Mammary epithelial cell (primary cell): ENCODE measurements at regions of chr4 and their contacts with region 1.

Region 1: GRCh38 chr4:52172166-52172565 is 121.1 kb downstream of the SPATA18 start:
- DNase-seq: peak; percentile 9
- H3K4me3 ChIP-seq: no peak overlapping the region
- H3K27ac ChIP-seq: no peak overlapping the region
- H3K4me1 ChIP-seq: no peaks in the 10 kb centered on the region
- H3K27me3 ChIP-seq: no peaks in the 10 kb centered on the region
- CTCF ChIP-seq: peak; percentile 46 to 52

Region 2: GRCh38 chr4:51885363-51885762 is 286.8 kb before region 1 on chr4:
- CTCF ChIA-PET with region 1: no interaction called
- dilution Hi-C with region 1: no loop called
- in situ Hi-C with region 1: no loop called
- intact Hi-C with region 1: loop called (anchors 1 kb)
- DNase-seq: no peak
- H3K4me3 ChIP-seq: no peak overlapping the region
- H3K27ac ChIP-seq: no peak overlapping the region
- H3K4me1 ChIP-seq: no peaks in the 10 kb centered on the region
- H3K27me3 ChIP-seq: no peaks in the 10 kb centered on the region
- CTCF ChIP-seq: peak; percentile 22 to 50

Region 3: GRCh38 chr4:52051619-52052474 is 120.3 kb before region 1 on chr4:
- CTCF ChIA-PET with region 1: no interaction called
- dilution Hi-C with region 1: no loop called
- in situ Hi-C with region 1: no loop called
- intact Hi-C with region 1: loop called (anchors 1 kb)
- DNase-seq: peak; percentile 97
- H3K4me3 ChIP-seq: peak overlapping the region; percentile 47 to 68 (median 60)
- H3K27ac ChIP-seq: peak overlapping the region; percentile 79
- H3K4me1 ChIP-seq: peaks cover 16% of the 10 kb centered on the region
- H3K27me3 ChIP-seq: no peaks in the 10 kb centered on the region
- CTCF ChIP-seq: no peak

Region 4: DNA sequence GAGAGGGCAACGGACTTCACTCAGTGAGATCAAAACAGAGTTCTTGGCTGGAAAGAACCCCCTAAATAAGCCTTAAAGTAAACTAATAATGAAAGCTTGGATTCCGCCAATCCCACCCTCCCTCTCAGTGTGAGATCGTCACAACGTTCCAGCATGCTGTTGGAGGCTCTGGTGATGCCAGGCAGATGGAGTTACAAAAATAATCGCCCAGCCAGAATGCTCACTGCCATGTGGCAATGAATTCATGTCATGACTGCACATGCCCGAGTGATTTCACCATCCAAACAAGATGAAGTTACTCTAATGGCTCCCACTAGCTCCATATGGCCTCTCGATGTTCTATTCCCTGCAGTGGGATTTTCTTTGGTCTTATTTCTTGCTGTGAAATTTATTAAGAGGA is 127.0 kb after region 1 on chr4:
- CTCF ChIA-PET with region 1: no interaction called
- dilution Hi-C with region 1: no loop called
- in situ Hi-C with region 1: no loop called
- intact Hi-C with region 1: no loop called
- DNase-seq: peak; percentile 61
- H3K4me3 ChIP-seq: no peak overlapping the region
- H3K27ac ChIP-seq: no peak overlapping the region
- H3K4me1 ChIP-seq: peaks cover 12% of the 10 kb centered on the region
- H3K27me3 ChIP-seq: no peaks in the 10 kb centered on the region
- CTCF ChIP-seq: no peak

Region 5: GRCh38 chr4:52358366-52358765 is 186.2 kb after region 1 on chr4:
- CTCF ChIA-PET with region 1: no interaction called
- dilution Hi-C with region 1: no loop called
- in situ Hi-C with region 1: no loop called
- intact Hi-C with region 1: no loop called
- DNase-seq: no peak
- H3K4me3 ChIP-seq: no peak overlapping the region
- H3K27ac ChIP-seq: no peak overlapping the region
- H3K4me1 ChIP-seq: no peaks in the 10 kb centered on the region
- H3K27me3 ChIP-seq: no peaks in the 10 kb centered on the region
- CTCF ChIP-seq: no peak

Region 6: GRCh38 chr4:52743444-52744019 is 571.4 kb after region 1 on chr4:
- CTCF ChIA-PET with region 1: no interaction called
- dilution Hi-C with region 1: no loop called
- in situ Hi-C with region 1: no loop called
- intact Hi-C with region 1: no loop called
- DNase-seq: no peak
- H3K4me3 ChIP-seq: no peak overlapping the region
- H3K27ac ChIP-seq: no peak overlapping the region
- H3K4me1 ChIP-seq: no peaks in the 10 kb centered on the region
- H3K27me3 ChIP-seq: no peaks in the 10 kb centered on the region
- CTCF ChIP-seq: no peak